Endothelial cell of umbilical vein (primary cell): ENCODE measurements at regions of chr16 and their contacts with region 1.

Region 1: DNA sequence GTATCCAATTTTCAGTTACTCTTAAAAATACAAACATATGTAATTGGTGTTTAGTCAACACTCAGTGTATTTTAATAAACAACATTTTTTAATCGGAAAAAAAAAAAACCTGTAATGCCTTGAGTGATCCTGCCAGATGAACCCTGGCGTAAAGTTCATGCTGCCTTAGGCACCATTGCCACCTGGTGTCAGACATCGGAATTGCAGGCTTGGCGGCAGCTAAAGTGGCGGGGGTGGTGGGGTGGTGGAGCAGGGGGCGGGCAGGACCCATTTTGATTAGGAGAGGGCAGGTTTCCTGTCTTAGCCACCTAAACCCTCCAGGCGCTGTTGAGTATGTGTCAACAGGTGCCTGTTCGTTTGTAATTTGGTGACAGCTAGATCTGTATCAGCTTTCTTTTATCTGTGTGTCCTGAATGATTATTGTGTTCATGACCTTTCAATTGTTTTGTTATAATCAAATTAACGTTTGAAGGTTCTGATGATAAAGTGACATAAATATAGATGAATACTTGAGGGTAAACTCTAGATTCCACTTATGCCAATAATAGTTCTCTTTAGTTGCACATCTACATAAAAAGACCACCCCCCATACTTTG is 588.7 kb downstream of the CDH13 start:
- DNase-seq: peak; percentile 48
- H3K4me3 ChIP-seq: no peak overlapping the region
- H3K27ac ChIP-seq: no peak overlapping the region
- H3K4me1 ChIP-seq: no peaks in the 10 kb centered on the region
- H3K27me3 ChIP-seq: no peaks in the 10 kb centered on the region
- CTCF ChIP-seq: peak; percentile 74 to 78
- POLR2A ChIP-seq: no peak

Region 2: GRCh38 chr16:82263521-82264143 is 951.9 kb before region 1 on chr16:
- CTCF ChIA-PET with region 1: interaction called, 62 read pairs
- POLR2A ChIA-PET with region 1: no interaction called
- dilution Hi-C with region 1: no loop called
- intact Hi-C with region 1: loop called (anchors 1 kb)
- DNase-seq: peak; percentile 55
- H3K4me3 ChIP-seq: no peak overlapping the region
- H3K27ac ChIP-seq: no peak overlapping the region
- H3K4me1 ChIP-seq: no peaks in the 10 kb centered on the region
- H3K27me3 ChIP-seq: peaks cover 4 to 13% of the 10 kb centered on the region in 2 experiments
- CTCF ChIP-seq: peak; percentile 84 to 85
- POLR2A ChIP-seq: no peak

Region 3: DNA sequence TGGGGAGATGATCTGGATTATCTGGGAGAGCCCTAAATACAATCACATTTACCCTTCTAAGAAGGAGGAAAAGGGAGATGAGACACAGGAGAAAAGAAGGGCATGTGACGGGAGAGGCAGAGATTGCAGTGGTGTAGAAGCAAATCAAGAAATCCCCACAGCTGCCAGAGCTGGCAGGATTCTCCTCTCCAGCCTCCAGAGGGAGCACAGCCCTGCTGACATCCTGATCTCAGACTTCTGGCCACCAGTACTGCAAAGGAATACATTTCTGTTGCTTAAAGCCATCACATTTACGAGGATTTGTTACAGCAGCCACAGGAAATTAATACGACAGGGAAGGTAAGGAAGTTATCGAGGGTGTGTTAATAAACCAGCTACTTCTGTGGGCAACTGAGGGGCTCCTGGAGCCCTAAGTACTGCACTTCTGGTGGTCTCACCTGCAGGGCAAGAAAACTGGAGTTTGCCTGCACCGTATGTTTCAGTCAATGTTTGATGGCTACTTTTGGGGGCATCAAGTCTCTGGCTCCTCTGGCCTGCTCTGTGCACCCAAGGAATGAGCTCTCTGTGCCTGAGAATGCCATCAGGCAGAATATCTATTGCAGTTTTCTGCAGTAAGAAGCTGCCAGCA is 611.6 kb before region 1 on chr16:
- CTCF ChIA-PET with region 1: interaction called, 20 read pairs
- POLR2A ChIA-PET with region 1: interaction called, 4 read pairs
- dilution Hi-C with region 1: no loop called
- intact Hi-C with region 1: loop called (anchors 1 kb)
- DNase-seq: peak; percentile 68
- H3K4me3 ChIP-seq: no peak overlapping the region
- H3K27ac ChIP-seq: no peak overlapping the region
- H3K4me1 ChIP-seq: no peaks in the 10 kb centered on the region
- H3K27me3 ChIP-seq: peaks cover 2 to 4% of the 10 kb centered on the region in 2 experiments
- CTCF ChIP-seq: peak; percentile 61 to 80
- POLR2A ChIP-seq: no peak

Region 4: DNA sequence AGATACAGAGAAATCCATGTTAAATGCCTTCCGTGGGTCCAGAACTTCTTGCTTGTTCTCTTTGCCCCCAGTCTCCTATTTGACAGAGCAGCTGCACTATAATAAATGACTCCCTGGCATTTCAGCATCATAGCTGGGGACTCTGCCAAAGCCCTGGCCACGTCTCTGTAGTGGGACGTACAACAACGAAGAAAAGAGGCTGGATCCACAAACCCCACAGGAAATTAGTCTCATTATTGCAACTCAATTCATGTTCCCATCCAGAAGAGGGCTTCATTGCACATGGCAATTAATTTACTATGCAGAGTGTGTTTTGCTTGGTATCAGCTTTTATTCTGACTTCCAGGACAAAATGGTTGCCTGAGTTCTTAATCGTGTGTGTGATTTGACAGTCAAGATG is 467.5 kb before region 1 on chr16:
- CTCF ChIA-PET with region 1: interaction called, 10 read pairs
- POLR2A ChIA-PET with region 1: no interaction called
- dilution Hi-C with region 1: no loop called
- intact Hi-C with region 1: no loop called
- DNase-seq: peak; percentile 94
- H3K4me3 ChIP-seq: peak overlapping the region in 1 of 3 experiments; percentile 7
- H3K27ac ChIP-seq: peak overlapping the region; percentile 57
- H3K4me1 ChIP-seq: peaks cover 38% of the 10 kb centered on the region
- H3K27me3 ChIP-seq: no peaks in the 10 kb centered on the region
- CTCF ChIP-seq: peak; percentile 29 to 40
- POLR2A ChIP-seq: no peak

Region 5: DNA sequence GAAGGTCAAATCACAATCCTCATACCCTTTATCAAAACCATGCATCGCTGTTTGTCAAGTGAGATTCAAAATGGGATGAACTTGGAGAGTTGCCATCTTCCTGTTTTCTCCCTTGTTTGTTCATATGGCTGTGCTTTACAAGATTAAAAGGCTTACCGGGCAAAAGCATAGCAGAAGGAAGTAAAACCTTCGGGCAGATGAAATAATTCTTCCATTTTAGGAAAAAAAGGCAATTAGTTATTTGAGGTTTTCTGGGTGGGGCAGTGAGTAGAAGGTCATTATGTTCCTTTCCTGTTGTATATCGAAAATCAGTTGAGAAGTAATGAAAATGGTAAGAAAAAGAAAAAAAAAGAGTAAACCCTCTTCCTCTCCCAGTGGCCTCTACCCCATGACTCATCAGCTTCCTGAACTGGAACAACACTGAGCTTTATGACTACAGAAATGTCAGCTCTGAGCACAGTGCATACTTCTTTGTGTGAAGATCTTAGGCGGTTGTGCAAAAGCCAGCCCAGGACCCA is 219.5 kb before region 1 on chr16:
- CTCF ChIA-PET with region 1: no interaction called
- POLR2A ChIA-PET with region 1: no interaction called
- dilution Hi-C with region 1: no loop called
- intact Hi-C with region 1: loop called (anchors 5 kb)
- DNase-seq: peak; percentile 96
- H3K4me3 ChIP-seq: peak overlapping the region in 1 of 3 experiments; percentile 31
- H3K27ac ChIP-seq: peak overlapping the region; percentile 91
- H3K4me1 ChIP-seq: peaks cover 23% of the 10 kb centered on the region
- H3K27me3 ChIP-seq: no peaks in the 10 kb centered on the region
- CTCF ChIP-seq: no peak
- POLR2A ChIP-seq: no peak

Region 6: GRCh38 chr16:83344014-83344413 is 128.5 kb after region 1 on chr16:
- CTCF ChIA-PET with region 1: no interaction called
- POLR2A ChIA-PET with region 1: no interaction called
- dilution Hi-C with region 1: no loop called
- intact Hi-C with region 1: loop called (anchors 2 kb)
- DNase-seq: peak; percentile 98
- H3K4me3 ChIP-seq: peak overlapping the region in 1 of 3 experiments; percentile 4
- H3K27ac ChIP-seq: peak overlapping the region; percentile 97
- H3K4me1 ChIP-seq: peaks cover 28% of the 10 kb centered on the region
- H3K27me3 ChIP-seq: no peaks in the 10 kb centered on the region
- CTCF ChIP-seq: no peak
- POLR2A ChIP-seq: peak; percentile 37

Region 7: DNA sequence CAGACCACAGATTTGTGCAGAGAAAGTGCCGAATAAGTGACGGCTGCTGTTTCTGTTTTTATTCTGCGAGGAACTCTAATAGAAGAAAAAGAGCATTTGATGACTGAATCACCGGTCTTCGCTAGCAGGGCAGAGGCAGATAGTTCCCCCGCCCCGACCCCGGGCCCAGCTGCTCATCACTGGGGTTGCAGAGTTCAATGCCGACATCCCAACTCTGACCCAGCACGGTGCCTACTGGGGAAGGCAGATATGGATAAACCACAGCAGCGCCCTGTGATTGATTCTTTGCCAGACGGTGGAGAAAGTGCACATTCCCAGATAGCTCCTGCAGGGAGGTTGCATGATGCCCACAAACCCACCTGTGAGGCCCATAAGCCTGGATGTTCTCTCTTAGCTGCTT is 234.4 kb after region 1 on chr16:
- CTCF ChIA-PET with region 1: interaction called, 17 read pairs
- POLR2A ChIA-PET with region 1: no interaction called
- dilution Hi-C with region 1: no loop called
- intact Hi-C with region 1: loop called (anchors 5 kb)
- DNase-seq: no peak
- H3K4me3 ChIP-seq: no peak overlapping the region
- H3K27ac ChIP-seq: no peak overlapping the region
- H3K4me1 ChIP-seq: no peaks in the 10 kb centered on the region
- H3K27me3 ChIP-seq: no peaks in the 10 kb centered on the region
- CTCF ChIP-seq: no peak
- POLR2A ChIP-seq: no peak